Mammary epithelial cell (primary cell): ENCODE measurements at regions of chr12 and their contacts with region 1.

Region 1: DNA sequence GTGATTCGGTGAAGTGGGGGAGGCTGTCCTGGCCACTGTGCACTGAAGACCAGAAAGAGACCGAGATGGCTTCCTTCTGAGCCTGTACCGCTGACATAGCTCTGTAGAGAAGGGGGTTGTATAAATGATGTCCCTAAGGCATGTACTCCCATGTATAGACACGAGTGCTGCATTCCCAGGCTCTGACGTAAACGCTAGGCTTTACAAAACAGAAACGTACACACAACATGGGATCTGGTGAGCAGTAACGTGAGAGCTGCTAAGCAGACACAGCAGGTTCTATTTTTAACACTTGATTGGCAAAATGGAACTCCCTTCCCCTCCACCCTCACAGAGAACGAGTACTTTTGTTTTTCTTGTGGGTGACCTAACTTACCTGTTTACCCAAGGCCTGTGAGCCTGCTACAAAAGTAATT is 35.9 kb downstream of the ACADS start:
- DNase-seq: peak; percentile 59
- H3K4me3 ChIP-seq: no peak overlapping the region
- H3K27ac ChIP-seq: peak overlapping the region; percentile 64
- H3K4me1 ChIP-seq: peaks cover 14% of the 10 kb centered on the region
- H3K27me3 ChIP-seq: no peaks in the 10 kb centered on the region
- CTCF ChIP-seq: no peak

Region 2: GRCh38 chr12:120698665-120699064 is 62.9 kb before region 1 on chr12:
- CTCF ChIA-PET with region 1: no interaction called
- dilution Hi-C with region 1: loop called (anchors 5 kb)
- in situ Hi-C with region 1: no loop called
- intact Hi-C with region 1: no loop called
- DNase-seq: no peak
- H3K4me3 ChIP-seq: no peak overlapping the region
- H3K27ac ChIP-seq: no peak overlapping the region
- H3K4me1 ChIP-seq: no peaks in the 10 kb centered on the region
- H3K27me3 ChIP-seq: no peaks in the 10 kb centered on the region
- CTCF ChIP-seq: no peak

Region 3: GRCh38 chr12:120799243-120800045 is 37.9 kb after region 1 on chr12:
- CTCF ChIA-PET with region 1: no interaction called
- dilution Hi-C with region 1: loop called (anchors 5 kb)
- in situ Hi-C with region 1: no loop called
- intact Hi-C with region 1: no loop called
- DNase-seq: no peak
- H3K4me3 ChIP-seq: no peak overlapping the region
- H3K27ac ChIP-seq: no peak overlapping the region
- H3K4me1 ChIP-seq: no peaks in the 10 kb centered on the region
- H3K27me3 ChIP-seq: no peaks in the 10 kb centered on the region
- CTCF ChIP-seq: no peak

Region 4: DNA sequence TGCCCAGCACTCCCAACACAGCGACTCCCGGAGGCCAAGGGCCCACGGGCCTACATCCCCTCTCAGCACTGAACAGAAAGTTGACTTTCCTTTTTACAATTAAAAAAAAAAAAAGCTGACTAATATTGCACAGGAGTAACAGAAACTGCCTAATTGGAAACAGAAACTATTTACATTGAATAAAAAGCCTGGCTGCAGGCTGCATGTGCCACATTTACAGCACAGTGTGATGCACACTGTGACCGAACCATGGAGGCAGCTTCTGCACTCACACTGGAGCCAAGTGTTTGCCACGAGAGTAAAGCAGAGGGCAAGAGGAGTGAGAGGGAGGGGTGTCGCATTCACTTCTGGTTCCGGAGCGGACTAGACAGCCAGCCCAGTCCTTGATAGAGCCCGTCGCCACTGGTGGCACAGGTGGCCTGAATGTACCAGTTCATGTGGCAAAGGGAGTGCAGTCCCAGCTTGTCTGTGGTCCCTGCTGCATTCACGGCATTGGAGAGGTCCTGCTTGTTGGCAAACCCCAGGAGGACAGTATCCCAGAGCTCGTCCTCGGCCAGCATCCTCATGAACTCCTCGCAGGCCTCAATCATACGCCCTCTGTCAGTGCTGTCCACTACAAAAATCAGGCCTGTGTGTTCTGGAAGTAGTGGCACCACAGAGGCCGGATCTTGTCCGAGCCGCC is 83.4 kb after region 1 on chr12:
- CTCF ChIA-PET with region 1: no interaction called
- dilution Hi-C with region 1: no loop called
- in situ Hi-C with region 1: no loop called
- intact Hi-C with region 1: no loop called
- DNase-seq: no peak
- H3K4me3 ChIP-seq: no peak overlapping the region
- H3K27ac ChIP-seq: no peak overlapping the region
- H3K4me1 ChIP-seq: peaks cover 11% of the 10 kb centered on the region
- H3K27me3 ChIP-seq: no peaks in the 10 kb centered on the region
- CTCF ChIP-seq: no peak

Region 5: GRCh38 chr12:120886199-120887018 is 124.9 kb after region 1 on chr12:
- CTCF ChIA-PET with region 1: no interaction called
- dilution Hi-C with region 1: no loop called
- in situ Hi-C with region 1: no loop called
- intact Hi-C with region 1: no loop called
- DNase-seq: no peak
- H3K4me3 ChIP-seq: no peak overlapping the region
- H3K27ac ChIP-seq: no peak overlapping the region
- H3K4me1 ChIP-seq: no peaks in the 10 kb centered on the region
- H3K27me3 ChIP-seq: no peaks in the 10 kb centered on the region
- CTCF ChIP-seq: no peak